Esophagus muscularis mucosa (tissue), 4 donors: ENCODE measurements at regions of chr16 and their contacts with region 1.

Region 1: DNA sequence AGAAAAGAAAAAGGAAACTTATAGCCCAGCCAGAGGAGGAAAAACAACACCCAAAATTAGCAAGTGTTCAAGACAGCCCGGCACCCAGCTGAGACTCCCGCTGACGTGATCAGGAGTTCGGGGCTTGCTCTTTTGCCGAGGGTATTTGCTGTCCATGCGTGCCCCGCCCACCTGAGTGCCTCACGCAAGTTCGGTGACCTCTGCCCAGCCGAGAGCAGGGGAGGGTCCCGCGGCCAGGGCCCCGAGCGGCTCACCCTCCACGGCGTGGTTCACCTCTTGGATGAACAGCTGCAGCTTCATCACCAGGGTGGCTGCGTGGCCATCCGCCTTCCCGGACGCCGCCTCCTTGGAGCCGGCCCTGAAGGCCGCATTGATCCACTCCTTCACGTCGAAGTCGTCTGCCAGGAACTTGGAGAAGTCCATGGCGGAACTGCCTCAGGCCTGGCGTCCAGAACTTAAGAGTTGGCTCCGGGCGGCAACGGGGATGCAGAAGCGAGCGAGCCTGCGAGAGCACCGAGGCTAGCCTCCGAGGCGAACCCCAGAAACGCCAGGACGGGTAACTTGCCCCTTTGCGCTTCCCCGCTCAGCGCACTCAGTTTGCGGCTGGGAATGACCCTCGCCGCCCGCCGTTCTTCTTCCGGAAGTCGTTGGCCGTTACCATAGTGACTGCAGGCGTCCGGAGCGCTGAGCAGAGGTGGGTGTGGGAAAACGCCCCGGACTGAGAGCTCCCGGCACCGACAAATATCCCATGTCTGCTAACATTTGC is at the start of gene COG7:
- DNase-seq: peak; percentile 95
- H3K4me3 ChIP-seq: peak within 1 kb of the TSS; percentile 83 to 98 (median 90)
- H3K27ac ChIP-seq: peak within 1 kb of the TSS; percentile 74 to 86 (median 84)
- H3K4me1 ChIP-seq: peaks cover 21 to 57% (median 49%) of the 10 kb centered on the region in 4 donors
- H3K27me3 ChIP-seq: no peaks in the 10 kb centered on the region
- CTCF ChIP-seq: peak in 1 of 3 experiments; percentile 17
- EP300 ChIP-seq: no peak
- POLR2A ChIP-seq: no peak
- total RNA-seq, gene COG7: 11.9 to 23.7 (median 15.1) TPM

Region 2: GRCh38 chr16:23182460-23183309 is 270.1 kb before region 1 on chr16 and contains the start of gene SCNN1G:
- intact Hi-C with region 1: no loop called
- DNase-seq: no peak
- H3K4me3 ChIP-seq: peak within 1 kb of the TSS; percentile 49 to 57 (median 50)
- H3K27ac ChIP-seq: no peak within 1 kb of the TSS
- H3K4me1 ChIP-seq: peaks cover 13 to 17% (median 15%) of the 10 kb centered on the region in 4 donors
- H3K27me3 ChIP-seq: peaks cover 15 to 82% (median 18%) of the 10 kb centered on the region in 4 donors
- CTCF ChIP-seq: peak in 2 of 3 experiments; percentile 95 to 96
- EP300 ChIP-seq: no peak
- POLR2A ChIP-seq: no peak
- total RNA-seq, gene SCNN1G: 0.06 to 0.34 TPM in 2 of 4 donors, not detected in the others

Region 3: DNA sequence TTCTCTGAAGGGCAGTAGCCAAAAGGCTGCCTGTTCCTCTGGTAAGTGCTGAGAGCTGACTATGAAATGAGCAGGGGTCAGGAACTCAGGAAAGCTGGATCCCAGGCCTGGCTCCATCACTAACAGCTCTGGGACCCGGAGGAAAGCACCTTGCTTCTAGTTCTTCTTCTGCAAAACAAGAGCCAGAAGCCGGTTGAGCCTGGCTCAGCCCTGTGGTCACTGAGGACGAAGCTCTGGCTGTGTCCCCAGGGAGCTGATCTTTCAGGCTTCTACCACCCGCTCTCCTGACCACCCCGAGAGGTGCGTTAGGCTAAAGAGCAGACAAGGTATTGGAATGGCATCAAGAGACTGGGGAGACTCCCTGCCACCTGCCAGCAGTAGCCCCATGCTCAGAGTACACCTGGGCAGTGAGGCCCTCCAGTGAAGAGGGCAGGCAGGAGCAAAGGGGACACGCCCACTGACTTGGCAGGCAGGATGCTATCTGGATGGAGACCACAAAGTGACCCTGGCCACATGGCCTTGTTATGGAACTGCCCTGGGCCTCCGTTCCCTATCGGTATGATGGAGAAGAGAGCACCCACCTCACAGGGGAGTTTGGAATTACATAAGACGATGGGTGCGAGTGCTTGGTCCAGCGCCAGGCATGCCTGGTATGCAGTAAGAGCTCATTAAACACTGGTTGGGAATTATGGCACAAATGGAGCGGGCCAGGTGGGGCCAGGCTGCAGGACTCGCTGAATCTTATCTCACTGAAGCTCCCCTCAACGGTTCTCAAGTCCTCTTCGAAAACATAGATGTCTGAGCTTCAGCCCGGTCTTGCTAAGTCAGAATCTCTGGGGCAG is 61.2 kb before region 1 on chr16:
- intact Hi-C with region 1: no loop called
- DNase-seq: no peak
- H3K4me3 ChIP-seq: no peak overlapping the region
- H3K27ac ChIP-seq: no peak overlapping the region
- H3K4me1 ChIP-seq: peaks cover 9 to 19% (median 16%) of the 10 kb centered on the region in 4 donors
- H3K27me3 ChIP-seq: no peaks in the 10 kb centered on the region
- CTCF ChIP-seq: no peak
- EP300 ChIP-seq: no peak
- POLR2A ChIP-seq: no peak

Region 4: GRCh38 chr16:23504451-23505179 is 51.9 kb after region 1 on chr16:
- intact Hi-C with region 1: loop called (anchors 5 kb)
- DNase-seq: peak; percentile 92
- H3K4me3 ChIP-seq: no peak overlapping the region
- H3K27ac ChIP-seq: peak overlapping the region; percentile 57 to 80 (median 67)
- H3K4me1 ChIP-seq: peaks cover 43 to 76% (median 66%) of the 10 kb centered on the region in 4 donors
- H3K27me3 ChIP-seq: no peaks in the 10 kb centered on the region
- CTCF ChIP-seq: no peak
- EP300 ChIP-seq: no peak
- POLR2A ChIP-seq: no peak